ENCODE measurements at regions of chr2 and their contacts with region 1.

Region 1: GRCh38 chr2:237154082-237154638 is 68.5 kb downstream of the COPS8 start:
- DNase-seq: peak; percentile 4 to 16 (median 8)
- H3K4me3 ChIP-seq: no peak overlapping the region
- H3K4me3 Mint-ChIP-seq: no peak overlapping the region
- H3K27ac ChIP-seq: no peak overlapping the region
- H3K27ac Mint-ChIP-seq: no peak overlapping the region
- H3K4me1 ChIP-seq: no peaks in the 10 kb centered on the region
- H3K4me1 Mint-ChIP-seq: no peaks in the 10 kb centered on the region
- H3K27me3 ChIP-seq: peaks cover 0 to 3% of the 10 kb centered on the region in 2 donors
- H3K27me3 Mint-ChIP-seq: peaks cover 18 to 35% (median 20%) of the 10 kb centered on the region in 3 donors
- CTCF ChIP-seq: peak; percentile 49

Region 2: DNA sequence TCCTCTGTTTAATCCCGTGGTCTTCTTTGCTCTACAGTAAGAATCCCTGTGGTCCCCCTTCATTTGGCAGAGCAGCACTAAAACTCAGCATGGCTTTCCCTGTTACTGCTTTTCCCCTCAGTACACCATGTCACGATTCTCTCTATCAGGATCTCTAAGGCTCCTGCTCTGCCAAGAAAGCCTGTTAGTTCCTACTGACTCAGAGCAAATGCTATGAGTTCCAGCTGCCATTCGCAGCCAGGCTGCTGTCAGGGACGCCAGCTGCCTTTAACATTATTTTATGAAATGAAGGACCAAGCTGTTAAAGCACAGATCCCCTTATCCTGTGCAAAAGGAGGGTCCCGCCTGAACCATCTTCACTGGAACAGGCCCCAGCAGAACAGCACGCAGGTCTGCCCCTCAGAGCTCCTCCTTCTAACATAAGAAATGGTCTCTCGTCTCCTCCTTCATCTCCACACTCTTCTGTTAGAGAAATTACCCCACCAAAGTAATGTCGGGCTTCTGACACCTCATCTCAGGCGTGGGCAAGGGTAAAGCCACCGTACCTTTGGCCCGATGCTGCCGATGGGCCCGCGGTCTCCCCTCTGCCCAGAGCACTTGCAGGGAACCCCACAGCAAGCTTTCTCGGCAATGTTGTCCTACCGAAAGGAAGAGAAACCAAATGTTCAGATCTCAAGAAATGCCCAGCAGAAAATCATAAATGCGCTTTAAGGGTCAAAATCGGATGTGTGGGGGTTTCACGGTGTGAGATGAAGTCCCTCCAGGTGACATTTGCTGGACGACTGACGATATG is 207.2 kb after region 1 on chr2:
- intact Hi-C with region 1: no loop called
- DNase-seq: no peak
- H3K4me3 ChIP-seq: no peak overlapping the region
- H3K4me3 Mint-ChIP-seq: no peak overlapping the region
- H3K27ac ChIP-seq: no peak overlapping the region
- H3K27ac Mint-ChIP-seq: no peak overlapping the region
- H3K4me1 ChIP-seq: no peaks in the 10 kb centered on the region
- H3K4me1 Mint-ChIP-seq: no peaks in the 10 kb centered on the region
- H3K27me3 ChIP-seq: no peaks in the 10 kb centered on the region
- H3K27me3 Mint-ChIP-seq: peaks cover 4 to 11% (median 6%) of the 10 kb centered on the region in 3 donors
- CTCF ChIP-seq: no peak

Region 3: DNA sequence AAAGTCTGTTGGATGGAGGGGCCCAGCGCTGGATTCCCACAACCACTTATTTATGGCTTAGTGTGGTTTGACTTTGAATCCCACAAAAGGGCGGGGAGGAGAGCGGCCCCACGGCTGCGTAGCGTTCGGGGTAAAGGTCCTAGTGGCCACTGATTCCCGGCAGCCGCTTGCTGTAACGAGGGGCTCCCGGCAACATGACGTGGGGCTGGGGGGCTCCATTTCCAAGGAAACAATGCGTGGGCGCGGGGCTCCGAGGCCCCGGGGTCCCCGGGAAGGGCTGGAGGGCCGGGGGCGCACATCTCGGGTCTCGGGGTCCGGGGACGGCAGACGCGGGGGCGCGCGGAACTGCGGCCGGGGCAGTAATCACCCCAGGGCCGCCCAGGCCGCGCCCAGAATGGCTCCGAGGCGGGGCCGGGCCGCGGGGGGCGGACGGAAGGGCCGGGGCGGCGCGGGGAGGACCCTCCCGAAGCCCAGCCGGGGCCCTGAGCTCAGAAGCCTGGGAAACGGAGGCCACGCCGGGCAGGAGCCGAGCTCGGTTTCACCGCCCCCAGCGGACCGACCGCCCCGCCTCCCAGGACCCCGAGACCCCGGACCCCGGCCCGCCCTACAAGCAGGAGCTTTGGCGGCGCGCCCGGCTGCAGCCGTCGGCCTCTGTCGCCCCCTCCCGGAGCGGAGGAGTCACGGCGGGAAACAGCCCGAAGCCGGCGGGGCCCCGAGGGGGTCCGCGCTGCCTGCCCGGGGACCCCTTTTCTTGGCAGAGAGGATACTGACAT is 321.0 kb after region 1 on chr2:
- intact Hi-C with region 1: loop called in 1 of 2 experiments (anchors 10 kb)
- DNase-seq: peak; percentile 47 to 56 (median 50)
- H3K4me3 ChIP-seq: peak overlapping the region; percentile 39 to 86 (median 50)
- H3K4me3 Mint-ChIP-seq: peak overlapping the region; percentile 83 to 90
- H3K27ac ChIP-seq: peak overlapping the region in 1 of 2 donors; percentile 73
- H3K27ac Mint-ChIP-seq: peak overlapping the region in 6 of 7 donors; percentile 45 to 85 (median 82)
- H3K4me1 ChIP-seq: peaks cover 18 to 20% of the 10 kb centered on the region in 2 donors
- H3K4me1 Mint-ChIP-seq: peaks cover 22% of the 10 kb centered on the region
- H3K27me3 ChIP-seq: peaks cover 11 to 27% of the 10 kb centered on the region in 2 donors
- H3K27me3 Mint-ChIP-seq: peaks cover 17 to 24% (median 20%) of the 10 kb centered on the region in 3 donors
- CTCF ChIP-seq: peak; percentile 98

Region 4: GRCh38 chr2:238938401-238939055 is 1784.4 kb after region 1 on chr2:
- intact Hi-C with region 1: no loop called
- DNase-seq: no peak
- H3K4me3 ChIP-seq: no peak overlapping the region
- H3K4me3 Mint-ChIP-seq: no peak overlapping the region
- H3K27ac ChIP-seq: no peak overlapping the region
- H3K27ac Mint-ChIP-seq: no peak overlapping the region
- H3K4me1 ChIP-seq: no peaks in the 10 kb centered on the region
- H3K4me1 Mint-ChIP-seq: no peaks in the 10 kb centered on the region
- H3K27me3 ChIP-seq: no peaks in the 10 kb centered on the region
- H3K27me3 Mint-ChIP-seq: peaks cover 7 to 19% (median 19%) of the 10 kb centered on the region in 3 donors
- CTCF ChIP-seq: no peak